ENCODE measurements at regions of chr2 and their contacts with region 1.

Region 1: GRCh38 chr2:33372940-33373553 is 103.4 kb upstream of the RASGRP3 start:
- DNase-seq: no peak
- H3K4me3 Mint-ChIP-seq: no peak overlapping the region
- H3K27ac Mint-ChIP-seq: no peak overlapping the region
- H3K4me1 Mint-ChIP-seq: no peaks in the 10 kb centered on the region
- H3K27me3 Mint-ChIP-seq: peaks cover 8% of the 10 kb centered on the region

Region 2: DNA sequence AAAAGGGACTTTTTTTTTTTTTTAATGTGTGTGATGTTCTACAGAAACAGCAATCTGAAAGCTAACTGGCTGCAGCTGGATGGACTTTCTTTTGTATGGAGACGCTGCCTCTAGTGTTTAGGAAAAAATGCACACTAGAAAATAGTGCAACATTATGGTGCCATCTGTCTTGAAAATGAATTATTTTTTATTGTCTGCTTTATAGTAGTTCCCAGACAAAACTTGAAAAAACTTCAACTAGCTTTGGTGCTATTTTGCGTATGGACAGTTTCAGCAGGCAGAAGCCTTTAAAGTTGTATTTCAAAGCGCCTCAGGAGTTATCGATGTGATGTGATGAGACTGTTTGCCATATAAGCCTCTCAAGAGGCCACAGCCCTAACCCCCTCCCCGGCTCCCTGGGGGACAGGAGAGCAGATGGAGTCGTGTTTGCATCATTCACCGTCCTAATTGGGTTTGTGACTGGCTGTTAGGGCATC is 339.4 kb before region 1 on chr2:
- intact Hi-C with region 1: loop called (anchors 2 kb)
- DNase-seq: no peak
- H3K4me3 Mint-ChIP-seq: no peak overlapping the region
- H3K27ac Mint-ChIP-seq: no peak overlapping the region
- H3K4me1 Mint-ChIP-seq: no peaks in the 10 kb centered on the region
- H3K27me3 Mint-ChIP-seq: peaks cover 15% of the 10 kb centered on the region

Region 3: GRCh38 chr2:33210626-33211025 is 162.4 kb before region 1 on chr2:
- intact Hi-C with region 1: loop called (anchors 5 kb)
- DNase-seq: no peak
- H3K4me3 Mint-ChIP-seq: no peak overlapping the region
- H3K27ac Mint-ChIP-seq: no peak overlapping the region
- H3K4me1 Mint-ChIP-seq: peaks cover 10% of the 10 kb centered on the region
- H3K27me3 Mint-ChIP-seq: peaks cover 8% of the 10 kb centered on the region

Region 4: GRCh38 chr2:33272001-33272400 is 101.0 kb before region 1 on chr2:
- intact Hi-C with region 1: loop called (anchors 5 kb)
- DNase-seq: no peak
- H3K4me3 Mint-ChIP-seq: no peak overlapping the region
- H3K27ac Mint-ChIP-seq: no peak overlapping the region
- H3K4me1 Mint-ChIP-seq: peaks cover 14% of the 10 kb centered on the region
- H3K27me3 Mint-ChIP-seq: peaks cover 39% of the 10 kb centered on the region